Activated CD4-positive, alpha-beta T cell treated with anti-CD3 and anti-CD28 coated beads, Interleukin-2, amount 10 ng/mL, durations not matched to agents 24 days and 14 days (primary cell): ENCODE measurements at regions of chr17 and their contacts with region 1.

Region 1: DNA sequence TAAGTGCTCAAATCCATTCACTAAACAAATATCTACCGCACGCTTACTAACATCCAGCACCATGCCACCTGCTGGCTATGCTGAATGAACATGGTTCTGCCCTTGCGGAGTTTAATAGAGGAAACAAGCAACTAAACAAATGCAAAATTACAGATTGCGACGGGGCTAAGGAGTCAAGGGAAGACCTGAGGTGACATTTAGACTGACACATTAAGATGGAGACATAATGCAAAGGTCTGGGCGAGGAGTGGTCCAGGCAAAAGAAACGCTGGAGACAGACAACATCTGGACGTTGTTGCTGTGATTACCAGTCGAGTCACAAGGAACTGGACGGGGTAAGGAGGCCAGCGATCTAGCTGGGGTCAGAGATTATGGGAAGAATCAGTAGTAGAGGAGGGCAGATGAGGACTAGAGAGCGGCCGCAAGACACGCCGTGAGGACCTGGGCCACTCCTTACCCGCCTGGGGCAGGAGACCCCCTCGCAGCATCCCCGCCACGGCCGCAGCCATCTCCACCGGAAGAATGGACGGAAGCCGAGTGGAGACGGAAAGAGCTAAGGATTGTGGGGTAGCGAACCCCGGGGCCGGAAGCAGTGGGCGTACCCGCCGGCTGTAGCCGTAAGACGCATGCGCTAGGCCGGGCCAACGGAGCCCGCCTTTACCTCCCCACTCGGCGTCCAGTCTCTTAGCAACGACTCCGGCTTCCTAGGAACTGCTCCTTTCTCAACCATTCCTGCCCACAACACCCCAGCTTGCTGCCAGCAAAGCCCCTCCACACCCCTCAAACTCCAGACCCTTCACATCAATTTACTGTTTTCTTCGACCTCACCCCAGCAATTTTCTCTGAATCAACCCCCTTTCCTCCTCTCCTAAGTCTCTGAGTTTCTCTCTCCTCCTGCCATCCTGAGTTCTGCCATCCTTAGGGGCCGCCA is at the starts of genes LRRC46 and MRPL10:
- DNase-seq: peak; percentile 98
- H3K4me3 Mint-ChIP-seq: peak within 1 kb of the TSS; percentile 94
- H3K27ac Mint-ChIP-seq: peak within 1 kb of the TSS; percentile 89
- H3K4me1 Mint-ChIP-seq: peaks cover 38% of the 10 kb centered on the region
- H3K27me3 Mint-ChIP-seq: no peaks in the 10 kb centered on the region
- total RNA-seq, gene LRRC46: 0.33 and 0.44 TPM in 2 replicates
- total RNA-seq, gene MRPL10: 55.0 and 58.3 TPM in 2 replicates

Region 2: DNA sequence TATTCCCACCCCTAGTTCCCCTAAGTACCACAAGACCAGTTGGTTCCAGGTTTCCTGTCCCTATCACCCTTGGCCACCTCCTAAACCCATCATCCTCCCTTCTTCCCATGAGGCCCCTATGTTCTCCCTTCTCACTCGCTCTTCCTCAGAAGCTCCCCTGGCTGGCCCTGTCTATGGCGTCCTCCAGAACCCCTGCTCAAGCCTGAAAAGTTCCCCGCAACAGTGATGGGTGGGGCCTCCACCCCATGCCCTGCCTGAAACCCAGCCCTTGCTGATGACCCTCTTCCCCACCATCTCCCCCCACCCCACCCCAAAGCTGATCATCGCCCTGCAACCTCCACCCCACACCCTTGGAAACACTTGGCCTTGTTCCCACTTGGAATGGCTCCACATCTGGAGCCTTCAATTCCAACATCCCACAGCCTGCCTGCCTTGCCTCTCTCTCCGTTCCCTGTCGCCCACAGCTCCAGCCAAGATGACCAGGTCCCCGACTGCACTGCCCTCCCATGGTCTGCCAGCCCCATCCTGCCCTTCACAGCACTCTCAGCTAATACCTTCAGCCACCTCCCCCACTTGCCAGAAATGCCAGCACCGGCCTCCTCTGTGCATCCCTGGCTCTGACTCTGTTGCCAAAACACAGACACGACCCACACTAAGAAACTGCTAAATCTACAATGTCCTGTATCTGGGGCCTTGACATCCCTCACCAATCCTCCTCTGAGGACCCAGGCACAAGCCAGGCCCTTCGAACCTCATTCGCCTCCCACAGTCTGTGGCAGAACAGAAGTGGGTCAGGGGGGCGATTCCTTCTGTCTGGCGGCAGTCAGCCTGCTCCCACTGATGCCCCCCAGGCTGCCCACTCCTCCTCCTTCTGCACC is 20.1 kb before region 1 on chr17:
- intact Hi-C with region 1: no loop called
- DNase-seq: no peak
- H3K4me3 Mint-ChIP-seq: no peak overlapping the region
- H3K27ac Mint-ChIP-seq: peak overlapping the region; percentile 30
- H3K4me1 Mint-ChIP-seq: peaks cover 6% of the 10 kb centered on the region
- H3K27me3 Mint-ChIP-seq: no peaks in the 10 kb centered on the region

Region 3: GRCh38 chr17:47895856-47896671 is 64.8 kb after region 1 on chr17 and contains the start of gene SP2:
- intact Hi-C with region 1: loop called (anchors 2 kb)
- DNase-seq: peak; percentile 100
- H3K4me3 Mint-ChIP-seq: peak within 1 kb of the TSS; percentile 97
- H3K27ac Mint-ChIP-seq: peak within 1 kb of the TSS; percentile 99
- H3K4me1 Mint-ChIP-seq: peaks cover 41% of the 10 kb centered on the region
- H3K27me3 Mint-ChIP-seq: no peaks in the 10 kb centered on the region
- total RNA-seq, gene SP2: 18.3 and 21.7 TPM in 2 replicates